ENCODE measurements at regions of chr10 and their contacts with region 1.

Region 1: GRCh38 chr10:124035928-124036558 is 57.4 kb downstream of the CHST15 start:
- DNase-seq: peak; percentile 96
- H3K4me3 ChIP-seq: peak overlapping the region; percentile 57
- H3K27ac ChIP-seq: peak overlapping the region; percentile 90
- H3K4me1 ChIP-seq: peaks cover 35% of the 10 kb centered on the region
- CTCF ChIP-seq: no peak

Region 2: GRCh38 chr10:124074501-124075109 is 38.6 kb after region 1 on chr10:
- CTCF ChIA-PET with region 1: no interaction called
- POLR2A ChIA-PET with region 1: interaction called, 3 read pairs
- intact Hi-C with region 1: loop called (anchors 5 kb)
- DNase-seq: peak; percentile 65
- H3K4me3 ChIP-seq: peak overlapping the region; percentile 25
- H3K27ac ChIP-seq: peak overlapping the region; percentile 88
- H3K4me1 ChIP-seq: peaks cover 98% of the 10 kb centered on the region
- CTCF ChIP-seq: no peak

Region 3: DNA sequence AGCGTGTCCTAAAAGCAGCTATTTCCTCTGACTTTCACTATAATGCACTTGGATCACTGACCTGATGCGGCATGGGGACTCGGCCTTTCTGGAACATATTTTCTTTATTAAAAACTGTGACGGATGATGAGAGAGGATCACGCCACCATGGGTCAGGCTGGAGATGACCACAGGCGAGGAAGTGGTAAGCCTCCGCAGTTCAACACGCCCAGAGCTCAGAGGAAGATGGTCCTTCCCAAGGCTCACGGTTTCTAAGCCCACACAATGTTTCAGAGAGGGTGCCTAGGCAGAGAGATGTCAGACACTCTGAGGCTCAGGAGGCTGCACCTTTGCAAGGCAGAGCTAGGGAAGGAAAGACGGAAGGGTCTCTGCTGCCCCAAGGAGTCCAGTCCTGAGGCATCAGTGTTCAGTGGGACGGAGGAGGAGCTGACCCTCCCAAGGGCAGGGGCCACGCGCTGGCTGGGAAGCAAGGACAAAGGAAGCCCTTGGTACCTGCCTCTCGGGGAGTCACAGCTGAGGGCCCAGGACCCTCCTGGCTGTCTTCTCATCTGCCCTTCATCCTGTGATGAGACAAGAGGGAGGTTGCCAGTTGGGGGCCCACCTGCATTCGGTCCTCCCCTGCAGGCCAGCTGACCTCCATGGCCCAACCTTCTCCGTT is 47.8 kb after region 1 on chr10:
- CTCF ChIA-PET with region 1: no interaction called
- POLR2A ChIA-PET with region 1: no interaction called
- intact Hi-C with region 1: loop called (anchors 1 kb)
- DNase-seq: no peak
- H3K4me3 ChIP-seq: no peak overlapping the region
- H3K27ac ChIP-seq: no peak overlapping the region
- H3K4me1 ChIP-seq: peaks cover 70% of the 10 kb centered on the region
- CTCF ChIP-seq: no peak

Measured in OCI-LY7 (cell line).